ENCODE measurements at regions of chr20 and their contacts with region 1.

Region 1: DNA sequence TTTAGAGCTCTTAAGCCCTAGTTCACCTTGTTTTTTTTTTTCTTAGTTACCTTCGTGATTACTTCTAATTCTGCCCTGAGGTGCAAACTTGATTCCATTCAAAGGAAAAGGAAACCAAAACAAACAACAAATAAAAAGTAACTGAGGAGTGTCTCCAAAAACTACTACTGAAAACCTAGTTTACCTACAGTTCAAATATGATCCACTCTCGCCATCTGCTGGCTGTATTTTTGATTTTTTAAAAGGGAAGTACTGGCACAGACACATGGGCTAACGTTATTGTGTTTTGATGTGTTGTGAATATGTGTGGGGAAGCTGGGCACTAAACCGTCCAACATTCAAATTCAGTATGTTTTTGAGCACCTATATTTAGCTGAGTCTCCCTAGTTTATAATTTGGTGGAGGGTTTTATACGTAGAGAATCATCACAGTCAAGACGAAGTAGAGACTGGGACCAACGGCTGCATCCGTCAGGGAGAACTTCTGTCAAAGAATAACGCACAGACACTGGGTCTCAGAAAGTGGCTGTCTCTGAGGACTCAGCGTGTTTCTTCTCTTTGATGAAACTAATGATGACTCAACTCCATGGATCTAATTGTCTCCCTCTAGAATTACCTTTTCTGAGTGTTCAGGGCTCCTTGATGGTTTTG is 373.5 kb upstream of the BTBD3 start:
- DNase-seq: peak in 1 of 2 donors; percentile 5
- ATAC-seq: peak in 1 of 2 donors; percentile 63
- H3K4me3 ChIP-seq: no peak overlapping the region
- H3K27ac ChIP-seq: no peak overlapping the region
- H3K4me1 ChIP-seq: no peaks in the 10 kb centered on the region
- H3K27me3 ChIP-seq: no peaks in the 10 kb centered on the region
- CTCF ChIP-seq: peak; percentile 37 to 66 (median 54)
- POLR2A ChIP-seq: no peak

Region 2: GRCh38 chr20:9616833-9617489 is 1927.2 kb before region 1 on chr20:
- in situ Hi-C with region 1: loop called in 1 of 4 experiments (anchors 25 kb)
- intact Hi-C with region 1: loop called (anchors 10 kb)
- DNase-seq: peak; percentile 5 to 21
- ATAC-seq: peak; percentile 56 to 65
- H3K4me3 ChIP-seq: no peak overlapping the region
- H3K27ac ChIP-seq: no peak overlapping the region
- H3K4me1 ChIP-seq: no peaks in the 10 kb centered on the region
- H3K27me3 ChIP-seq: no peaks in the 10 kb centered on the region
- CTCF ChIP-seq: peak; percentile 45 to 78 (median 61)
- POLR2A ChIP-seq: no peak

Region 3: GRCh38 chr20:10469599-10469998 is 1074.6 kb before region 1 on chr20:
- in situ Hi-C with region 1: loop called in 1 of 4 experiments (anchors 25 kb)
- intact Hi-C with region 1: loop called (anchors 5 kb)
- DNase-seq: peak in 1 of 2 donors; percentile 20
- ATAC-seq: peak; percentile 58 to 82
- H3K4me3 ChIP-seq: no peak overlapping the region
- H3K27ac ChIP-seq: no peak overlapping the region
- H3K4me1 ChIP-seq: peaks cover 10 to 33% of the 10 kb centered on the region in 2 donors
- H3K27me3 ChIP-seq: no peaks in the 10 kb centered on the region
- CTCF ChIP-seq: peak; percentile 34 to 59 (median 41)
- POLR2A ChIP-seq: no peak

Region 4: DNA sequence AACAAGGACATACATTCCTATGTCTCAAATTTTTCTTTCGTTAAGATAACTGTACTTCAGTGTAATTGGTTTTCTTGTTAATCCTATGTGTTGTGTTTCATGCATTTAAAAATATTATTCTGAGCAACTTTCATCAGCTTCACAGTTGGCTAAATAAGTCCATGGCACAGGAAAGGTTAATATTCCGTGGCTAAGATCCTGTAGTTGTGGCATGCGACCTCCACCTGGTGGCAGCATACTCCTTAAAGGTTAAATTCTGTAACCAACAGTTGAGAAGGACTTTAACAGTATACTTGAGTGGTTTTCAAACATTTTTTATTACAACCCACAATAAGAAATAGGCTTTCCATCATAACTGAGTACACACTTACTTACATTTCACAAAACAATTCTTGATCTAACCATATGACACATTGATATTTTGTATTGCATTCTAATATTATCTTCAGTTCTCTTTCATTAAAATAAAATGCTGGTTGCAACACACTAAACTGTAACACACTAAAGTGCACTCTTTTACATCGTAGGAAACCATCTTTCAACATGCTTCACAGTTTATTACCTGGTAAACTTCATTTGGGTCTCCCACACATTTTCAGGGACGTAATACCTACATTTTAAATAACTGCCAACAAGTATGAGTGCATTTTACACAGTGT is 990.7 kb before region 1 on chr20:
- in situ Hi-C with region 1: loop called in 3 of 4 experiments (anchors 5 to 25 kb)
- intact Hi-C with region 1: loop called (anchors 1 kb)
- DNase-seq: peak; percentile 22 to 45
- ATAC-seq: peak; percentile 58 to 74
- H3K4me3 ChIP-seq: no peak overlapping the region
- H3K27ac ChIP-seq: no peak overlapping the region
- H3K4me1 ChIP-seq: no peaks in the 10 kb centered on the region
- H3K27me3 ChIP-seq: no peaks in the 10 kb centered on the region
- CTCF ChIP-seq: peak; percentile 63 to 79 (median 72)
- POLR2A ChIP-seq: no peak

Region 5: DNA sequence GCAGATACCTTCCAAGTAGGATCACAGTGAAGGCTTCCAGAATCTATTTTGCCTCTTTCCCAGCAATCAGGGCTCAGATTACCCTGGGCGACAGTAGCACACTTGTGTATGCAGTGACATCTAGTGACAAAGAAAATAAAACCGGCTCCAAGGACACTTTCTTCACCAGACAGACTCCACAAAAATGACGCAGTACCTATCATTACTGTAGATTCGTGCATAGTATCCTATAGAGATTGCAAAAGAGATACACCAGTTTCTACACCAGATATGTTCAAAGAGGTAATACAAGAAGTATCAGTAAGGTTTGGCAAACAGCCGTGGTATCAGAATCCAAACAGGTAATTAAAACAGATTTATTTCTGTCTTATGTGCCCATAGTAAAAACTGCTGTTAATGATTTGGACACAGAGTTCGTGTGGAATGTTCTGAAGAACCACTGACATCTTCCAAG is 270.0 kb before region 1 on chr20:
- in situ Hi-C with region 1: loop called in 1 of 4 experiments (anchors 10 kb)
- intact Hi-C with region 1: loop called (anchors 10 kb)
- DNase-seq: peak; percentile 14 to 18
- ATAC-seq: peak; percentile 85 to 95
- H3K4me3 ChIP-seq: no peak overlapping the region
- H3K27ac ChIP-seq: no peak overlapping the region
- H3K4me1 ChIP-seq: peaks cover 0 to 6% of the 10 kb centered on the region in 2 donors
- H3K27me3 ChIP-seq: no peaks in the 10 kb centered on the region
- CTCF ChIP-seq: peak; percentile 26 to 67 (median 44)
- POLR2A ChIP-seq: no peak

Region 6: DNA sequence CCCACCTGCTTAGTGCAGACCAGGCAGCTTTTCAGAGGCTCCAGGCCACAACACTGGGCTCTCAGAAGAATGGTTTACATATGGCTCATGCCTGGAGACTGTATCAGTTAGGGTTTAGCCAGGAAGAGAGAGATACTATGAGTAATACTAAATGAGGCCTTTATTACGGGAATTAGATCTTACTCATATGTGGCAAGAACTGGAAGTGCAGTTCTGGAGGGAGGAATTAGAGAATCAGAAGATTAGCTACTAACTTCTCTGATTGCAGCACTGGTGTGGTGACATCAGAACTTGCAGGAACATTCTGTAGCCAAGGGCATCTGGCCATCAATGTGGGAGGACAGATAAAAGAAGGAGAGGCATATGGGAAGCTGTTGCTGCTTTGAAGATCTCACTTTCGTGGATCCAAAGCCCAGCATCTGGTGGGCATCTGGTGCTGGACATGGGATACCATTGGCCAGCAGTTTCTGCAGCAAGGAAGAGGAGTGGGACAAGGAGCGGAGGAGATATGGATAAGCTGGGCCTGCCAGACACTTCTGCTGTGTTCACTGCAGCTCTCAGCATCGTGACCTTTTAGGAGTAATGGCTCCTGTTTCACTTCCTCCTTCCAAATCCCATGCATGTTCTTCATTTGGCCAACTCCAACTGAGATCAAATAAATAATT is 622.0 kb after region 1 on chr20:
- in situ Hi-C with region 1: no loop called
- intact Hi-C with region 1: no loop called
- DNase-seq: peak in 1 of 2 donors; percentile 33
- ATAC-seq: peak in 1 of 2 donors; percentile 64
- H3K4me3 ChIP-seq: no peak overlapping the region
- H3K27ac ChIP-seq: no peak overlapping the region
- H3K4me1 ChIP-seq: no peaks in the 10 kb centered on the region
- H3K27me3 ChIP-seq: no peaks in the 10 kb centered on the region
- CTCF ChIP-seq: no peak
- POLR2A ChIP-seq: no peak

Measured in gastrocnemius medialis (tissue), 4 donors.